Activated CD4-positive, alpha-beta T cell treated with anti-CD3 and anti-CD28 coated beads, Interleukin-2, amount 10 ng/mL, durations not matched to agents 24 days and 14 days (primary cell): ENCODE measurements at regions of chr16 and their contacts with region 1.

Region 1: DNA sequence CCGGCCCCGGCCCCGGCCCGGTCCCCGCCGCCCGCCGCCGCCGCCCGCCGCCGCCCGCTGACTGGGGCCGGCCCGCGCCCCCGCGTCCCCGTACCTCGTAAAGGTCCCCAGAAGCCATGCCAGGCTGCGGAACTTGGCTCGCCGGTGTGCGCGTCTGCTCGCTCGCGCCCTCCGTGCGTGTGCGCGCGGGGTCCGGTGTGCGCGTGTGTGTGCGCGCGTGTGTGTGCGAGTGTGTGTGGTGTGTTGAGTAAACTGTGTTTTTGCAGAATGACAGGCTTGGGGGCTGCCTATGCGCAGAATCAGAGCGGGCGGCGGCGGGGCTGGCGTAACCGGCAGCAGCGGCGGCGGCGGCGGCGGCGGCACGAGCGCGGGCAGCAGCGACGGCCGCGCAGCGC is 345 bp downstream of the CDYL2 start:
- DNase-seq: peak; percentile 89
- H3K4me3 Mint-ChIP-seq: peak overlapping the region; percentile 93
- H3K27ac Mint-ChIP-seq: peak overlapping the region; percentile 97
- H3K4me1 Mint-ChIP-seq: peaks cover 45% of the 10 kb centered on the region
- H3K27me3 Mint-ChIP-seq: no peaks in the 10 kb centered on the region

Region 2: GRCh38 chr16:80540516-80541272 is 263.4 kb before region 1 on chr16 and contains the start of gene DYNLRB2:
- intact Hi-C with region 1: loop called (anchors 2 kb)
- DNase-seq: peak; percentile 98
- H3K4me3 Mint-ChIP-seq: peak within 1 kb of the TSS; percentile 96
- H3K27ac Mint-ChIP-seq: peak within 1 kb of the TSS; percentile 98
- H3K4me1 Mint-ChIP-seq: peaks cover 32% of the 10 kb centered on the region
- H3K27me3 Mint-ChIP-seq: peaks cover 9% of the 10 kb centered on the region
- total RNA-seq, gene DYNLRB2: not detected in 2 replicates

Region 3: GRCh38 chr16:80656711-80657150 is 147.3 kb before region 1 on chr16:
- intact Hi-C with region 1: loop called (anchors 5 kb)
- DNase-seq: peak; percentile 86
- H3K4me3 Mint-ChIP-seq: peak overlapping the region; percentile 85
- H3K27ac Mint-ChIP-seq: peak overlapping the region; percentile 94
- H3K4me1 Mint-ChIP-seq: peaks cover 31% of the 10 kb centered on the region
- H3K27me3 Mint-ChIP-seq: no peaks in the 10 kb centered on the region

Region 4: GRCh38 chr16:80759419-80760162 is 44.5 kb before region 1 on chr16:
- intact Hi-C with region 1: loop called (anchors 1 kb)
- DNase-seq: no peak
- H3K4me3 Mint-ChIP-seq: peak overlapping the region; percentile 19
- H3K27ac Mint-ChIP-seq: peak overlapping the region; percentile 85
- H3K4me1 Mint-ChIP-seq: peaks cover 26% of the 10 kb centered on the region
- H3K27me3 Mint-ChIP-seq: no peaks in the 10 kb centered on the region

Region 5: GRCh38 chr16:81006814-81007696 is 203.0 kb after region 1 on chr16 and contains the starts of genes CENPN and CMC2:
- intact Hi-C with region 1: loop called (anchors 2 kb)
- DNase-seq: peak; percentile 99
- H3K4me3 Mint-ChIP-seq: peak within 1 kb of the TSS; percentile 98
- H3K27ac Mint-ChIP-seq: peak within 1 kb of the TSS; percentile 100
- H3K4me1 Mint-ChIP-seq: peaks cover 53% of the 10 kb centered on the region
- H3K27me3 Mint-ChIP-seq: no peaks in the 10 kb centered on the region
- total RNA-seq, gene CENPN: 61.8 and 63.3 TPM in 2 replicates
- total RNA-seq, gene CMC2: 130 and 137 TPM in 2 replicates